Activated CD4-positive, alpha-beta memory T cell treated with anti-CD3 and anti-CD28 coated beads, Interleukin-2, amount 10 ng/mL, durations not matched to agents 7 days and 5 days (primary cell): ENCODE measurements at regions of chr4 and their contacts with region 1.

Region 1: GRCh38 chr4:4248029-4248884 is at the start of gene TMEM128:
- DNase-seq: peak; percentile 93
- H3K4me3 Mint-ChIP-seq: peak within 1 kb of the TSS; percentile 82
- H3K27ac Mint-ChIP-seq: peak within 1 kb of the TSS; percentile 97
- H3K4me1 Mint-ChIP-seq: peaks cover 42% of the 10 kb centered on the region
- H3K27me3 Mint-ChIP-seq: no peaks in the 10 kb centered on the region
- total RNA-seq, gene TMEM128: 15.2 to 16.0 TPM

Region 2: GRCh38 chr4:4260253-4260652 is 12.0 kb after region 1 on chr4:
- CTCF ChIA-PET with region 1: interaction called, 26 read pairs
- POLR2A ChIA-PET with region 1: interaction called, 57 read pairs
- DNase-seq: no peak
- H3K4me3 Mint-ChIP-seq: no peak overlapping the region
- H3K27ac Mint-ChIP-seq: no peak overlapping the region
- H3K4me1 Mint-ChIP-seq: peaks cover 4% of the 10 kb centered on the region
- H3K27me3 Mint-ChIP-seq: no peaks in the 10 kb centered on the region

Region 3: GRCh38 chr4:4269856-4270255 is 21.6 kb after region 1 on chr4:
- CTCF ChIA-PET with region 1: interaction called, 5 read pairs
- POLR2A ChIA-PET with region 1: interaction called, 57 read pairs
- DNase-seq: peak; percentile 56
- H3K4me3 Mint-ChIP-seq: peak overlapping the region; percentile 70
- H3K27ac Mint-ChIP-seq: peak overlapping the region; percentile 99
- H3K4me1 Mint-ChIP-seq: peaks cover 42% of the 10 kb centered on the region
- H3K27me3 Mint-ChIP-seq: no peaks in the 10 kb centered on the region

Region 4: GRCh38 chr4:4289941-4290850 is 41.9 kb after region 1 on chr4 and contains the starts of genes LYAR and ZBTB49:
- CTCF ChIA-PET with region 1: interaction called, 3 read pairs
- POLR2A ChIA-PET with region 1: interaction called, 30 read pairs
- DNase-seq: peak; percentile 97
- H3K4me3 Mint-ChIP-seq: peak within 1 kb of the TSS; percentile 97
- H3K27ac Mint-ChIP-seq: peak within 1 kb of the TSS; percentile 83
- H3K4me1 Mint-ChIP-seq: peaks cover 42% of the 10 kb centered on the region
- H3K27me3 Mint-ChIP-seq: no peaks in the 10 kb centered on the region
- total RNA-seq, gene LYAR: 47.4 to 49.8 TPM
- total RNA-seq, gene ZBTB49: 6.6 to 7.4 TPM

Region 5: GRCh38 chr4:4334798-4335520 is 86.7 kb after region 1 on chr4:
- CTCF ChIA-PET with region 1: interaction called, 36 read pairs
- POLR2A ChIA-PET with region 1: interaction called, 6 read pairs
- DNase-seq: peak; percentile 85
- H3K4me3 Mint-ChIP-seq: no peak overlapping the region
- H3K27ac Mint-ChIP-seq: no peak overlapping the region
- H3K4me1 Mint-ChIP-seq: peaks cover 2% of the 10 kb centered on the region
- H3K27me3 Mint-ChIP-seq: peaks cover 3% of the 10 kb centered on the region

Region 6: DNA sequence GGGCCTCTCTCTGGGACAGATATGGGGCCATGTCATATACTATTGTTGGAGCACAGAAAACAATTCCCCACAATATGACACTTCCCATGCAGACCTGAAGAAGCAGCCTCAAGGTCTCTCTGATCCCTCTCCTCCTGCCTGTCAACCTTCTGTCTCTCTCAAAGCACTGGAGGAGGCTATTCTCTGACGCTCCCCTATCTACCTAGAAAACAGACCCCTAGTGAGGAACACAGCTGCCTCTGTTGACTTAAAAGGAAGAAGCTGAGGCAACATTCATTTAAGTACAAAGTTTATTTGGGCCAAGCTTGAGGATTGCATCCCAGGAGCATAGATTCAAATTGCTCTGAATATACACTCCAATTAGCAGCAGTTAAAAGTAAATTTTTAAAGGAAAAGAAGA is 99.3 kb after region 1 on chr4:
- CTCF ChIA-PET with region 1: no interaction called
- POLR2A ChIA-PET with region 1: interaction called, 11 read pairs
- DNase-seq: no peak
- H3K4me3 Mint-ChIP-seq: no peak overlapping the region
- H3K27ac Mint-ChIP-seq: no peak overlapping the region
- H3K4me1 Mint-ChIP-seq: peaks cover 23% of the 10 kb centered on the region
- H3K27me3 Mint-ChIP-seq: no peaks in the 10 kb centered on the region

Region 7: DNA sequence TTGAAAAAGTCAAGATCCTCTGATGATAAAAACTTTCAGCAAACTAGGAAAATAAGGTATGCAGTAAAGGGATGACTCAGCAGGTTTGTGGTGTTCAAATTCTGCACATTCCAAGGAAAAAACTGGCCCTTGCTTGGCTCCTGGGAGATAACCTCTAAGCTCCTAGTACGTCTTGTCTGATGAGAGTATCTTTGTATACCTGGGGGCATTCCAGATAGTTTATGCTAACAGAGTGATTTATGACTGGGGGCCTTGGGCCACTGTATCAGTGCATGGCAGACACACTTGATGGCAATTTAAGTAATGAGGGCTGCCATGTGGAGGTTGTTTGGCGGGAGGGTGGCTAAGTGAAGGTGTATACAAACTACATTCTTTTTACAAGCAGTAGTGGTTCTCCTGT is 195.6 kb after region 1 on chr4:
- CTCF ChIA-PET with region 1: no interaction called
- POLR2A ChIA-PET with region 1: no interaction called
- DNase-seq: no peak
- H3K4me3 Mint-ChIP-seq: no peak overlapping the region
- H3K27ac Mint-ChIP-seq: no peak overlapping the region
- H3K4me1 Mint-ChIP-seq: peaks cover 6% of the 10 kb centered on the region
- H3K27me3 Mint-ChIP-seq: no peaks in the 10 kb centered on the region

Region 8: DNA sequence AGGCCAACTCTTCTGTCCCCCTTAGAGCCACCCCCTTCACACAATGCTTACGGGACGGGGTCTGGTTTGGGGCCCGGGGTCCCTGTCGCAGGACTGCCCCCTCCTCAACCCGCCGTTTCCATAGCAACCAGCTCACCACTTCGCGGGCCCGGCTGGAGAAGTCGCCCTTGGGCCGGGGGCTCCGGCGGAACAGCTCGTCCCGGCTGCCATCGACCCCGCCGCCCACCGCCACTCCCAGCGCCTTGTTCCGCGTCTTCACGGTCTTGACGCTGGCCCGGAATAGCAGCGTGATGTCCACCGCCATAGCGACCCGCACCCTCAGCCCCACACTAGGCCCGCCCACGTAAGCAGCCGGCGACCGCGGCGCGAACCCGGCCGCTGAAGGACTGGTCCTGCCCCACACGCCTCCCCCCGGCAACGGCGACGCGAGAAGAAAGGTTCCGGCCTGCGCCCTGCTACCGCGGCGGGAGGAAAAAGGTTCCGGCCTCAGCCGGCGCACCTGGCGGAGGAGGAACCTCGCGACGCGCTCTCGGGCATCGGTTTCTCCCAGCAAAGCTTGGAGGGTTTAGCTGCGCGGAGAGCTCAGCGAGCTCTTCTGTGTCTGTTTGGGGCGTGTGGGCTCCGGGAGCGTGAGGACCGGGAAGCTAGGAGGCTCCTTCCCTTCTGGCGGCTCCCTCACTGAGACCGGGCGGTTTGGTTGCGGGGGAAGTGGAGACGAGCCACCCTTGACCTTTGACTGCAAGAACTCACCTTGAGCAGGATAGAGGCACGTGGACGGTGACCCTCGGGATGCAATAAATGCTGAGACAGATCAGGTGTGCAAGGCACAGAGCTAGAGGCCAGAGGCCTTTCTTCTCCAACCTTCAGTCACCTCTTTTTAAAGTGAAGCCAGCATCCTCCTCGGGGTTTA is 293.7 kb after region 1 on chr4 and contains the start of gene STX18:
- CTCF ChIA-PET with region 1: interaction called, 3 read pairs
- POLR2A ChIA-PET with region 1: interaction called, 28 read pairs
- DNase-seq: peak; percentile 89
- H3K4me3 Mint-ChIP-seq: peak within 1 kb of the TSS; percentile 94
- H3K27ac Mint-ChIP-seq: peak within 1 kb of the TSS; percentile 87
- H3K4me1 Mint-ChIP-seq: peaks cover 45% of the 10 kb centered on the region
- H3K27me3 Mint-ChIP-seq: no peaks in the 10 kb centered on the region
- total RNA-seq, gene STX18: 22.8 to 26.5 TPM